Naive thymus-derived CD4-positive, alpha-beta T cell (primary cell): ENCODE measurements at regions of chr12 and their contacts with region 1.

Region 1: GRCh38 chr12:89019408-89020120 is 332.7 kb downstream of the DUSP6 start:
- DNase-seq: peak; percentile 27 to 75 (median 60)
- ATAC-seq: peak; percentile 96
- H3K4me3 ChIP-seq: peak overlapping the region; percentile 14
- H3K4me3 Mint-ChIP-seq: no peak overlapping the region
- H3K27ac ChIP-seq: no peak overlapping the region
- H3K27ac Mint-ChIP-seq: no peak overlapping the region
- H3K4me1 ChIP-seq: peaks cover 0 to 8% of the 10 kb centered on the region in 2 donors
- H3K4me1 Mint-ChIP-seq: peaks cover 0 to 29% (median 5%) of the 10 kb centered on the region in 7 donors
- H3K27me3 ChIP-seq: no peaks in the 10 kb centered on the region
- H3K27me3 Mint-ChIP-seq: peaks cover 0 to 13% (median 5%) of the 10 kb centered on the region in 5 donors

Region 2: GRCh38 chr12:89051065-89051677 is 31.6 kb after region 1 on chr12:
- CTCF ChIA-PET with region 1: no interaction called
- POLR2A ChIA-PET with region 1: no interaction called
- intact Hi-C with region 1: loop called (anchors 1 kb)
- DNase-seq: peak in 7 of 9 donors; percentile 28 to 63 (median 51)
- ATAC-seq: peak; percentile 70
- H3K4me3 ChIP-seq: no peak overlapping the region
- H3K4me3 Mint-ChIP-seq: no peak overlapping the region
- H3K27ac ChIP-seq: no peak overlapping the region
- H3K27ac Mint-ChIP-seq: peak overlapping the region in 1 of 9 donors; percentile 34
- H3K4me1 ChIP-seq: no peaks in the 10 kb centered on the region
- H3K4me1 Mint-ChIP-seq: peaks cover 0 to 30% (median 0%) of the 10 kb centered on the region in 7 donors
- H3K27me3 ChIP-seq: no peaks in the 10 kb centered on the region
- H3K27me3 Mint-ChIP-seq: no peaks in the 10 kb centered on the region

Region 3: GRCh38 chr12:89470741-89471509 is 451.4 kb after region 1 on chr12:
- CTCF ChIA-PET with region 1: interaction called, 6 read pairs
- POLR2A ChIA-PET with region 1: no interaction called
- intact Hi-C with region 1: loop called in 1 of 2 experiments (anchors 1 kb)
- DNase-seq: peak in 6 of 9 donors; percentile 28 to 56 (median 46)
- ATAC-seq: peak; percentile 86
- H3K4me3 ChIP-seq: no peak overlapping the region
- H3K4me3 Mint-ChIP-seq: peak overlapping the region in 1 of 10 donors; percentile 35
- H3K27ac ChIP-seq: no peak overlapping the region
- H3K27ac Mint-ChIP-seq: peak overlapping the region in 5 of 9 donors; percentile 12 to 85 (median 48)
- H3K4me1 ChIP-seq: peaks cover 23 to 31% of the 10 kb centered on the region in 2 donors
- H3K4me1 Mint-ChIP-seq: peaks cover 26 to 63% (median 44%) of the 10 kb centered on the region in 7 donors
- H3K27me3 ChIP-seq: no peaks in the 10 kb centered on the region
- H3K27me3 Mint-ChIP-seq: no peaks in the 10 kb centered on the region

Region 4: GRCh38 chr12:89862511-89863179 is 843.1 kb after region 1 on chr12:
- CTCF ChIA-PET with region 1: no interaction called
- POLR2A ChIA-PET with region 1: no interaction called
- intact Hi-C with region 1: loop called in 1 of 2 experiments (anchors 5 kb)
- DNase-seq: peak in 7 of 9 donors; percentile 46 to 66 (median 57)
- ATAC-seq: peak; percentile 49
- H3K4me3 ChIP-seq: peak overlapping the region; percentile 44
- H3K4me3 Mint-ChIP-seq: peak overlapping the region; percentile 78 to 86 (median 82)
- H3K27ac ChIP-seq: peak overlapping the region; percentile 87
- H3K27ac Mint-ChIP-seq: peak overlapping the region; percentile 96 to 99 (median 98)
- H3K4me1 ChIP-seq: peaks cover 23 to 30% of the 10 kb centered on the region in 2 donors
- H3K4me1 Mint-ChIP-seq: peaks cover 40 to 72% (median 53%) of the 10 kb centered on the region in 7 donors
- H3K27me3 ChIP-seq: no peaks in the 10 kb centered on the region
- H3K27me3 Mint-ChIP-seq: no peaks in the 10 kb centered on the region

Region 5: GRCh38 chr12:90940872-90941499 is 1921.4 kb after region 1 on chr12:
- CTCF ChIA-PET with region 1: no interaction called
- POLR2A ChIA-PET with region 1: no interaction called
- intact Hi-C with region 1: loop called (anchors 5 kb)
- DNase-seq: peak in 1 of 9 donors; percentile 14
- ATAC-seq: no peak
- H3K4me3 ChIP-seq: no peak overlapping the region
- H3K4me3 Mint-ChIP-seq: no peak overlapping the region
- H3K27ac ChIP-seq: no peak overlapping the region
- H3K27ac Mint-ChIP-seq: no peak overlapping the region
- H3K4me1 ChIP-seq: no peaks in the 10 kb centered on the region
- H3K4me1 Mint-ChIP-seq: peaks cover 0 to 2% (median 0%) of the 10 kb centered on the region in 7 donors
- H3K27me3 ChIP-seq: no peaks in the 10 kb centered on the region
- H3K27me3 Mint-ChIP-seq: peaks cover 5 to 13% (median 5%) of the 10 kb centered on the region in 5 donors